ENCODE measurements at regions of chr1 and their contacts with region 1.

Region 1: DNA sequence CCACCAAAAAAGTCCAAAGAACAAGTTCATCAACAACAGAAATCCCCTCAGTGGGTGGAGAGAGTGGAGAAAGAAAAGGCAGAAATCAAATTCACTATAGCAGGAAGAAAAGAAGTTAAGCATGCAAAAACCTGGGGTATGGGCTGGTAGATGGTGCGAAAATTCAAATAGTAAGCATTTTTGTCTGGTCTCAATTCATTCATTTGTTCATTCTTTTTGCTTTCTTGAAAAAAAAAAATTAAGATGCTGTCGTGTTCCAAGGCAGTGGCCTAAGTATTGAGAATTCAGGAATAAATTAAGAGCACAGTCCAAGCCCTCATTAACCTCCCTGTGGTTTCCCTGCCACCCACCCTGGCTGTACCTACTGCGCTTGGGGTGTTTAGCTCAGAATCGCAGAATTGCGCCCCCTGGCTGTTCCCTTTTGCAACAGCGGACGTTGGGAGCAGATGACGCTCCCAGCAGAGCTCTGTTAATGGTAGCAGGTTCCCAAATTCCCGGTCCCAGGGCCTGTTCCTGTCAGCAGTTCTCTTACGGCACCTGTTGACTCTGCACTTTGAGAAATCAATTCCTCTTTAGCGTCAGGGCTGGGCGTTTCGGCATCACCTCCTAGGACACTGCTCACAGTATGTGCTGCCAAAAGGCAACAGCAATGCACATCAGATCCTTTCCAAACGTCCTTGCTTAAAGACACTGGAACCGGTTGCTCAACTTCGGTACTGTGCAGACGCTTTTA is 34.0 kb upstream of the SSX2IP start:
- DNase-seq: peak; percentile 85
- ATAC-seq: peak; percentile 96
- H3K4me3 Mint-ChIP-seq: no peak overlapping the region
- H3K27ac Mint-ChIP-seq: no peak overlapping the region
- H3K4me1 Mint-ChIP-seq: peaks cover 20% of the 10 kb centered on the region
- H3K27me3 Mint-ChIP-seq: no peaks in the 10 kb centered on the region
- CTCF ChIP-seq: peak; percentile 96

Region 2: GRCh38 chr1:84620720-84621313 is 103.5 kb before region 1 on chr1:
- CTCF ChIA-PET with region 1: interaction called, 10 read pairs
- POLR2A ChIA-PET with region 1: no interaction called
- DNase-seq: peak; percentile 87
- ATAC-seq: peak; percentile 91
- H3K4me3 Mint-ChIP-seq: peak overlapping the region; percentile 79
- H3K27ac Mint-ChIP-seq: no peak overlapping the region
- H3K4me1 Mint-ChIP-seq: peaks cover 21% of the 10 kb centered on the region
- H3K27me3 Mint-ChIP-seq: peaks cover 2% of the 10 kb centered on the region
- CTCF ChIP-seq: peak; percentile 99

Region 3: GRCh38 chr1:84668185-84668584 is 56.1 kb before region 1 on chr1:
- CTCF ChIA-PET with region 1: interaction called, 27 read pairs
- POLR2A ChIA-PET with region 1: interaction called, 3 read pairs
- DNase-seq: no peak
- ATAC-seq: peak; percentile 89
- H3K4me3 Mint-ChIP-seq: no peak overlapping the region
- H3K27ac Mint-ChIP-seq: no peak overlapping the region
- H3K4me1 Mint-ChIP-seq: peaks cover 14% of the 10 kb centered on the region
- H3K27me3 Mint-ChIP-seq: no peaks in the 10 kb centered on the region
- CTCF ChIP-seq: no peak

Region 4: GRCh38 chr1:84690397-84691121 is 33.7 kb before region 1 on chr1 and contains the start of gene SSX2IP:
- CTCF ChIA-PET with region 1: interaction called, 50 read pairs
- POLR2A ChIA-PET with region 1: interaction called, 3 read pairs
- DNase-seq: peak; percentile 100
- ATAC-seq: peak; percentile 89
- H3K4me3 Mint-ChIP-seq: peak within 1 kb of the TSS; percentile 91
- H3K27ac Mint-ChIP-seq: peak within 1 kb of the TSS; percentile 97
- H3K4me1 Mint-ChIP-seq: peaks cover 40% of the 10 kb centered on the region
- H3K27me3 Mint-ChIP-seq: no peaks in the 10 kb centered on the region
- CTCF ChIP-seq: no peak
- total RNA-seq, gene SSX2IP: 17.5 to 21.7 TPM (median 20.8 TPM) in 3 replicates

Region 5: DNA sequence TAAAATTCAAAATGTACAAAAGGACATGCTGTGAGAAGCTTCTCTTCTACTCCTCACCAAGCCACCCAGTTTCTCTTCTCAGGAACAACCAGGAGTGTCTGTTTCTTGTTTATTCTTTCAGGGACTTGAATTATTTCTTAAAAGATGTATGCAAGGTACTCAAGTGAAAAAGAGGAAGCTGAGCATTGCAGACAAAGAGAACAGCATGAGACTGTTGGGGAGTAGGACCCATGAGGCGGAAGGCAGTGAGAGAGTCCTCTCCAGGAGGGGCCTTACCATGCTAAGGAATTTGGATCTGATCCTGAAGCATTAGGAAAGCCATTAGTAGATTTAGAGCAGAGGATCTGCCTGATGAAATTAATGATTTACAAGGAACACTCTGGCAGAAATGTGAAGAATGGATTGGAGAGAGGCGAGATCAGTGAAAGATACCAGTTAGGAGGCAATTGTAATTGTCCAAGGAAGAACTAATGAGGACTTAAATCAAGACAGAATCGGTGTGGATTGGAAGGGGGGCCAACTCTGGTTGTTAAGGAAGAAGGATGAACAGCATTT is 19.3 kb before region 1 on chr1:
- CTCF ChIA-PET with region 1: interaction called, 43 read pairs
- POLR2A ChIA-PET with region 1: no interaction called
- DNase-seq: no peak
- ATAC-seq: peak; percentile 83
- H3K4me3 Mint-ChIP-seq: no peak overlapping the region
- H3K27ac Mint-ChIP-seq: no peak overlapping the region
- H3K4me1 Mint-ChIP-seq: peaks cover 19% of the 10 kb centered on the region
- H3K27me3 Mint-ChIP-seq: no peaks in the 10 kb centered on the region; the same call in 1 of the 2 replicates
- CTCF ChIP-seq: no peak

Region 6: DNA sequence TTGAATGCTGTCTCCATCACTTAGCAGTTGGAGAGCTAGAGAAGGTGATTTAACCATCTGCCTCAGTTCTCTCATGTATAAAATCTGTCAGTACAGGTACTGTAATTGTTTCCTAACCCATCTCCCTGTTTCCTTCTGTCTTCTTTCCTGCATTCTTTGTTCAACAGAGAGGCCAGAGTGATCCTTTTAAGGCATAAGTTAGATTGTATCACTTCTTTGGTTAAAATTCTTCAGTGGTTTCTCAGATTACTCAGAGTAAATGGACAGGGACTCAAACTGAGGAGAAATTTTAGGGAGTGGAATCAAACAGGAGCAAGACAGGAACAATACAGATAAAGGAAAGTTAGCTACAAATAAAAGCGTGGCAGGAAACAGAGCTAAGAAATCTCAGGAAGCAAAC is 11.2 kb after region 1 on chr1:
- CTCF ChIA-PET with region 1: interaction called, 77 read pairs
- POLR2A ChIA-PET with region 1: no interaction called
- DNase-seq: no peak
- ATAC-seq: no peak
- H3K4me3 Mint-ChIP-seq: no peak overlapping the region
- H3K27ac Mint-ChIP-seq: no peak overlapping the region
- H3K4me1 Mint-ChIP-seq: peaks cover 21% of the 10 kb centered on the region
- H3K27me3 Mint-ChIP-seq: no peaks in the 10 kb centered on the region
- CTCF ChIP-seq: no peak

Region 7: GRCh38 chr1:84772428-84772943 is 48.2 kb after region 1 on chr1:
- CTCF ChIA-PET with region 1: interaction called, 14 read pairs
- POLR2A ChIA-PET with region 1: no interaction called
- DNase-seq: peak; percentile 84
- ATAC-seq: peak; percentile 73
- H3K4me3 Mint-ChIP-seq: no peak overlapping the region
- H3K27ac Mint-ChIP-seq: no peak overlapping the region; the same call in 1 of the 2 replicates
- H3K4me1 Mint-ChIP-seq: peaks cover 17% of the 10 kb centered on the region; the same call in 1 of the 2 replicates
- H3K27me3 Mint-ChIP-seq: no peaks in the 10 kb centered on the region
- CTCF ChIP-seq: peak; percentile 92

Region 8: GRCh38 chr1:85048296-85049064 is 324.2 kb after region 1 on chr1 and contains the start of gene MCOLN3:
- CTCF ChIA-PET with region 1: no interaction called
- POLR2A ChIA-PET with region 1: no interaction called
- DNase-seq: peak; percentile 68
- ATAC-seq: peak; percentile 62
- H3K4me3 Mint-ChIP-seq: peak within 1 kb of the TSS; percentile 84
- H3K27ac Mint-ChIP-seq: no peak within 1 kb of the TSS
- H3K4me1 Mint-ChIP-seq: peaks cover 27% of the 10 kb centered on the region
- H3K27me3 Mint-ChIP-seq: peaks cover 57% of the 10 kb centered on the region
- CTCF ChIP-seq: no peak
- total RNA-seq, gene MCOLN3: 3.5 to 6.4 TPM (median 3.8 TPM) in 3 replicates